H1 (cell line): ENCODE measurements at regions of chr7 and their contacts with region 1.

Region 1: DNA sequence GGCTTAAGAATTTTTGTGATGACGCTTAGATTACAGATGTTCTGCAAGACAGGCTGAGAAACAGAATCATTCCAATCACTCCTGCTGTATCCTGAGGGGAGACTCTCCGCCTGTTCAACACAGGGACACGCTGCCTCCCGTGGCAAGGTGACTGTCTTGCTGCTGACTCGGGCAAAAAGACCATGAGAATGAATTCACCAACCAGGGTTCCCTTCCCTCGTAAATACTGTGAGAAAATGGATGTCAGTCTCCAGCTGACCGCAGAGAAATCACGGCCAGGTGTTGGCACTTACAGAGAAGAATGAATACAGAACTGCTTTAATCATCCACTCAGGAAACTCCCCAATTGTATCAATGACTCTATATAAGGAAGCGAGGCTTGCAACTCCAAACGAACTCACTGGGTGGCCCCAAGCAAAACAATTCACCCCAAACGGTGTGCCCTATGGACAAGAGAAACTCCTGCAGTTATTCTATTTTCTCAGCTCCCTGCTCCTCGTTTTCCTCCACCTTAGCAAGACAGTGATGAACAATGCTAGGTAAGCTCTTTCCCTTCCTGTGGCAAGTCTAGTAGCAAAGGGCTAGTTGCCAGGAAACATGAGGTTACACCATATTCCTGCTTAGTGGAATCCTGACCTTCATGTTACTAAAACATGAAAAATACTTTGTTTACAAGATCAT is 22.8 kb downstream of the GNA12 start:
- DNase-seq: peak in 1 of 2 experiments; percentile 59
- H3K4me3 ChIP-seq: peak overlapping the region in 1 of 4 experiments; percentile 17; a peak in 1 of 8 replicates
- H3K27ac ChIP-seq: peak overlapping the region; percentile 83
- H3K4me1 ChIP-seq: peaks cover 48 to 63% (median 57%) of the 10 kb centered on the region in 4 experiments
- H3K27me3 ChIP-seq: no peaks in the 10 kb centered on the region
- CTCF ChIP-seq: peak in 2 of 3 experiments; percentile 14 to 19; a peak in 2 of 4 replicates
- EP300 ChIP-seq: peak in 1 of 2 experiments; percentile 81; a peak in 1 of 3 replicates
- POLR2A ChIP-seq: peak; percentile 40 to 68
- RAD21 ChIP-seq: no peak

Region 2: DNA sequence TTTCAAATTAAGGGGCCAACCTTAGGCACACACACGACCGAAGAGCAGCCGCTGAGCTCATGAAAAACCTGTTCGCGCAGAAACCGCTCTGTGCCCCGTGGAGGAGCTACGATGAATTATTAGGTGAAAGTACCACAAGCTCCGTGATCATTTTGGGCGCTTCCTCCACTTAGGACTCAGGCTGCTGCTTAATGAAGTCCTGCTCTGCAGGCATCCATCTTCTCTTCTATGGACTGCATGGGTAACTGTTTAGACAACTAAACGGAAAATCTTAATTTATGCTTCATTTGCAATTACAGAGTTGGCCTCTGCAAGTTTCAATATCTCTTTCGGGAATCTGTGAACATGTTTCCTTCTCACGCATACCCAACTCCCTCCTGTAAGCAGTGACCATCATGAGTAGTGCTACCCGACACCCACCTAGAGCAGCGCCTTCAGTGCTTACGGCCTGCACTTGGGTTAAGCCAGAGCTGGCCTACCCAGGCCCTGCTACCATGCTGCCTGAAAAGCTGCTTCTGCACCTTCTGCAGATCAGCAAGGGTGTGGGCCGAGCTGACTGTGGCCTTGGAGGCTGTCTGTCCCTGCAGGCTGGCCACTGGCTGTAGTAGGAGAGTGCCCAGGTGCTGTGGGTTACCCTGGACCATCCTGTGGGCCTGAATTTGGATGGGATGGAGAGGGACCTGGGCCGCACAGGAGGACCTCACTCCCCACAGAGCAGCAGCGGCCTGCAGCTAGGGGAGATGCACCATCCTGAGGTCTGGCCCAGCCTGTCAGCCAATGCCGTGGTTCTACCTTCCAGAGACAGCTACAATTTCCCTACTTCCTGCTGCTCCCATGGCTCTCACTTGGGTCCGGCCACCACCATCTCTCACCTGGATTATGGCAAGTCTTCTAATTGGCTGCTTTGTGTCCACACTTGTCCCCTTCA is 13.2 kb before region 1 on chr7:
- CTCF ChIA-PET with region 1: interaction called, 13 read pairs
- POLR2A ChIA-PET with region 1: interaction called, 21 read pairs
- DNase-seq: no peak
- H3K4me3 ChIP-seq: no peak overlapping the region
- H3K27ac ChIP-seq: no peak overlapping the region
- H3K4me1 ChIP-seq: peaks cover 18 to 33% (median 19%) of the 10 kb centered on the region in 4 experiments
- H3K27me3 ChIP-seq: no peaks in the 10 kb centered on the region
- CTCF ChIP-seq: no peak
- EP300 ChIP-seq: no peak
- POLR2A ChIP-seq: no peak
- RAD21 ChIP-seq: no peak

Region 3: DNA sequence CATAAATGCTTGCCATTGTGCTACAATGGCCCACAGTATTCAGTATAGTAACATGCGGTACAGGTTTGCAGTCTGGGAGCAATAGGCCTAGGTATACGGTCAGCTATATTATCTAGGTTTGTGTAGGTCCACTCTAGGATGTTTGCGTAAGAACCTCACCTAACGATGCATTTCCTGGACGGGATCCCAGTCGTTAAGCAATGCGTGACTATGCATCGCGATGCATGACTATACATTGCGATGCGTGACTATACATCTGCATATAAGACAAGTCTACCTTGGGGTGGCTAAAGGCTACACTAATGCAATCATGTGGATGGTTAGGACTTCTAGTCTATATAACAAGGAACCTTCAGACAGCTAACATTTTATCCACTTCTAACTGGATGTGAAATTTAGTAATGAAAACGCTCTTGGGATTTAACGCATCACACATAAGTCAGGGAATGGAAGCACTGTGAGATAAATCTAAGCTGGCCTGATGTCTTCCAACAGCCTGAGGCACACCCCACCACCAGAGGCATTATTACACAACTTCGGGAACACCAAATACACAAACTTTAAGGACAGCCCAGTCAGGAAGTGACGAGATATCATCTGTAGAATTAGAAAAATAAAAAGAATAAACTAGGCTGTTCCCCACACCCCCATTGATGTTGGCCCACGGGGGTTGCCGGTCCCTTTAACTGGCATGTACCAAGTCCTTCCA is 13.6 kb after region 1 on chr7:
- CTCF ChIA-PET with region 1: interaction called, 10 read pairs
- POLR2A ChIA-PET with region 1: interaction called, 22 read pairs
- DNase-seq: no peak
- H3K4me3 ChIP-seq: no peak overlapping the region
- H3K27ac ChIP-seq: no peak overlapping the region
- H3K4me1 ChIP-seq: peaks cover 0 to 16% (median 5%) of the 10 kb centered on the region in 4 experiments; a peak in 4 of 7 replicates
- H3K27me3 ChIP-seq: no peaks in the 10 kb centered on the region
- CTCF ChIP-seq: no peak
- EP300 ChIP-seq: no peak
- POLR2A ChIP-seq: no peak
- RAD21 ChIP-seq: no peak

Region 4: DNA sequence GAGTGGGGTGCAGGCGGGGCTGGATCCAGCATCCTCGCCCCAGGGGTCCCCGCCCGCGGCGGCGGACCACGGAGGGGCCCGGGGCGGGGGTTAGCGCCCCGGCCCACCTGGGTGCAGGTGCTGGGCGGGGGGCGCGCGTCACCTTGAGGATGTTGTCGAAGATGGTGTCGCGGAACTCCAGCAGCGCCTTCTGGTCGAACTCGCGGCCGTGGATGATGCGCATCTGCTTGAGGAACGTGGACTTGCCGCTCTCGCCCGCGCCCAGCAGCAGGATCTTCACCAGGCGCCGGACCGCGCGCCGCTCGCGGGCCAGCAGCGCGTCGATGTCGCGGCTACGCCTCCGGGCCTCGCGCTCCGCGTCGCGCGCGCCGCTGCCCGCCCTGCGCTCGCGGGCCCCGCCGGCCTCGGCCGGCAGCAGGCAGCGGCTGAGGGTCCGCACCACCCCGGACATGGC is 22.4 kb after region 1 on chr7:
- CTCF ChIA-PET with region 1: interaction called, 3 read pairs
- POLR2A ChIA-PET with region 1: interaction called, 22 read pairs
- DNase-seq: no peak
- H3K4me3 ChIP-seq: peak overlapping the region; percentile 60 to 88 (median 74)
- H3K27ac ChIP-seq: peak overlapping the region; percentile 53; the same call in 1 of the 2 replicates
- H3K4me1 ChIP-seq: peaks cover 3 to 11% (median 6%) of the 10 kb centered on the region in 4 experiments; a peak in 6 of 7 replicates
- H3K27me3 ChIP-seq: no peaks in the 10 kb centered on the region
- CTCF ChIP-seq: no peak
- EP300 ChIP-seq: no peak
- POLR2A ChIP-seq: no peak; a peak in 1 of 3 replicates
- RAD21 ChIP-seq: no peak